Heart right ventricle (tissue), 16 donors: ENCODE measurements at regions of chr9 and their contacts with region 1.

Region 1: GRCh38 chr9:137605121-137606004 is at the start of gene ARRDC1:
- DNase-seq: peak; percentile 92 to 93
- ATAC-seq: peak; percentile 86 to 92 (median 88)
- H3K4me3 ChIP-seq: peak within 1 kb of the TSS; percentile 64 to 90 (median 78)
- H3K27ac ChIP-seq: peak within 1 kb of the TSS; percentile 80 to 95 (median 91)
- H3K4me1 ChIP-seq: peaks cover 15 to 47% (median 29%) of the 10 kb centered on the region in 9 donors
- H3K27me3 ChIP-seq: no peaks in the 10 kb centered on the region
- CTCF ChIP-seq: peak in 1 of 9 donors; percentile 10
- total RNA-seq, gene ARRDC1: 10.3 to 20.3 (median 14.1) TPM

Region 2: GRCh38 chr9:137459147-137459600 is 146.2 kb before region 1 on chr9 and contains the start of gene NSMF:
- intact Hi-C with region 1: loop called in 1 of 10 experiments (anchors 10 kb)
- DNase-seq: peak; percentile 92 to 96
- ATAC-seq: peak; percentile 85 to 95 (median 92)
- H3K4me3 ChIP-seq: peak within 1 kb of the TSS; percentile 45 to 81 (median 68)
- H3K27ac ChIP-seq: peak within 1 kb of the TSS; percentile 3 to 89 (median 72)
- H3K4me1 ChIP-seq: peaks cover 19 to 44% (median 29%) of the 10 kb centered on the region in 9 donors
- H3K27me3 ChIP-seq: peaks cover 0 to 14% (median 0%) of the 10 kb centered on the region in 7 donors
- CTCF ChIP-seq: no peak
- total RNA-seq, gene NSMF: 5.3 to 17.0 (median 9.0) TPM

Region 3: DNA sequence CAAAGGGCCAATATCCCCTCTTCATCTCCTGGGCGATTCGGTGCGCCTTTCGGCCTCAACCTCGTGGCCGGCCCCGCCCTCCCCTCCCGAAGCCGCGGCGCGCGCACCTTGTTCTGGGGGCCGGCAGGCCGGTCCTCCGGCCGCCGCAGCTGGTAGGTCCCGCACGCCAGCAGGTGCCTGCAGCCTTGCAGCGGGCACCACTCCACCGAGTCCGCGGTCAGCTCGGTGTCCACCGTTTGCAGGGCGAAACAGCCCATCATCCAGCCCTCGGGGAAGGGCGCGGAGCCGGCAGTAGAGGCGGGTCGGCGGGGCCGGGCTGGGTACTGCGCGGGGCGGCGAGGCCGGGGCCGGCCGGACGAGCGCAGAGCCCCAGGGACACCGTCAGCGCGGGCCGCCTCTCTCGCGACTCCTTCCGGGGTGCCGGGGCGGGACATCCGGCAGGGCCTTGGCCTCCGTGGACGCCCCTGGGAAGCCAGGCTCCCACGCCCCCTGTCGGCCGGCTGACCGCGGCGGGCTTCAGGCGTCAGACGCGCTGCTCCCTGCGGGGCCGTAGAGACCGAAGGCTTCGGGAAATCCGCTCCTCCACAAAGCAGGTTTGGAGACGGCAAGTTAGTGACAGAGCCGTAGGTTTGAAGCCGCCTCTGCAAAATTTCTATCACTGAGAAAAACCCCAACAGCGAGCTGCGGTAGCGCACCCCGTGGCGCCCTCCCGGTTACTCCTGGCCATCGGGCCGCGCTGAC is 26.7 kb before region 1 on chr9 and contains the start of gene DPH7:
- intact Hi-C with region 1: loop called in 2 of 10 experiments (anchors 2 kb)
- DNase-seq: peak; percentile 97 to 99
- ATAC-seq: peak; percentile 91 to 98 (median 95)
- H3K4me3 ChIP-seq: peak within 1 kb of the TSS; percentile 83 to 98 (median 93)
- H3K27ac ChIP-seq: peak within 1 kb of the TSS; percentile 28 to 91 (median 90)
- H3K4me1 ChIP-seq: peaks cover 15 to 60% (median 43%) of the 10 kb centered on the region in 9 donors
- H3K27me3 ChIP-seq: no peaks in the 10 kb centered on the region
- CTCF ChIP-seq: peak; percentile 91 to 100 (median 97)
- total RNA-seq, gene DPH7: 11.7 to 20.3 (median 17.8) TPM

Region 4: GRCh38 chr9:137618105-137619067 is 13.0 kb after region 1 on chr9 and contains the start of gene EHMT1:
- intact Hi-C with region 1: loop called in 1 of 10 experiments (anchors 1 kb)
- DNase-seq: peak; percentile 85 to 91
- ATAC-seq: peak; percentile 81 to 94 (median 84)
- H3K4me3 ChIP-seq: peak within 1 kb of the TSS; percentile 70 to 100 (median 94)
- H3K27ac ChIP-seq: peak within 1 kb of the TSS; percentile 89 to 97 (median 94)
- H3K4me1 ChIP-seq: peaks cover 17 to 55% (median 44%) of the 10 kb centered on the region in 9 donors
- H3K27me3 ChIP-seq: no peaks in the 10 kb centered on the region
- CTCF ChIP-seq: no peak
- total RNA-seq, gene EHMT1: 26.4 to 39.7 (median 31.1) TPM

Region 5: GRCh38 chr9:137945581-137945980 is 340.2 kb after region 1 on chr9:
- intact Hi-C with region 1: no loop called
- DNase-seq: no peak
- ATAC-seq: no peak
- H3K4me3 ChIP-seq: no peak overlapping the region
- H3K27ac ChIP-seq: no peak overlapping the region
- H3K4me1 ChIP-seq: no peaks in the 10 kb centered on the region
- H3K27me3 ChIP-seq: peaks cover 0 to under 1% (median 0%) of the 10 kb centered on the region in 7 donors
- CTCF ChIP-seq: no peak